GM10248 (cell line): ENCODE measurements at regions of chr7 and their contacts with region 1.

Region 1: GRCh38 chr7:82615527-82615926 is 171.9 kb upstream of the CACNA2D1 start:
- DNase-seq: no peak
- CTCF ChIP-seq: no peak

Region 2: DNA sequence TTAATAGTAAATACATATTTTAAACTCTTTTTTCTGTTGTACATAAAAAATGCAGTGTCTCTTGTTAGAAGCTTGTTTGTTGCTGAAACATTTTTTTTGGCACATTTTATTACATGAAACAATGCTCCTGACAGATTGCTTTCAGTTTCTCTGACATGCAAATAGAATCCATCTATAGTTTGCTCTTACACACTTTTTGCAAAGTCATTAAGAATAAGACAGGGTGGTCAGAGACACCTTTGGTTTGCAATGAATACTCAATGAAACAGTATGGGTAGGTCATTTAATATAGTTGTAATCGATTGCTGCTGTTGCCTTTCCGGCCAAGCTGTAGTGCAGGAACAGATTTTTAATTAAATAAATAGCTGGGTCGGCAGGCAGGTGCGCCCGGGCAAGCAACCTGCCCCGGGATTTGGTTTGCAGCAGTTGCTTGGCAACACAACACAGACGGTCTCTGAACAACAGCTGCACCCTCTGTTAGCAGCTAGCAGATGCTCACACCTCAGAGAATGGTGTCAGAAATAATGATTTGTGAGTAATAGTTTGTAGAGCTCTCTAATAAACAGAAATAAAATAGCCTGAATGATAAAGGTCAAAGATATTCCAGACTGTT is 56.2 kb before region 1 on chr7:
- CTCF ChIA-PET with region 1: no interaction called
- POLR2A ChIA-PET with region 1: no interaction called
- DNase-seq: no peak
- CTCF ChIP-seq: no peak

Region 3: GRCh38 chr7:82593780-82594179 is 21.7 kb before region 1 on chr7:
- CTCF ChIA-PET with region 1: no interaction called
- POLR2A ChIA-PET with region 1: no interaction called
- DNase-seq: no peak
- CTCF ChIP-seq: no peak

Region 4: DNA sequence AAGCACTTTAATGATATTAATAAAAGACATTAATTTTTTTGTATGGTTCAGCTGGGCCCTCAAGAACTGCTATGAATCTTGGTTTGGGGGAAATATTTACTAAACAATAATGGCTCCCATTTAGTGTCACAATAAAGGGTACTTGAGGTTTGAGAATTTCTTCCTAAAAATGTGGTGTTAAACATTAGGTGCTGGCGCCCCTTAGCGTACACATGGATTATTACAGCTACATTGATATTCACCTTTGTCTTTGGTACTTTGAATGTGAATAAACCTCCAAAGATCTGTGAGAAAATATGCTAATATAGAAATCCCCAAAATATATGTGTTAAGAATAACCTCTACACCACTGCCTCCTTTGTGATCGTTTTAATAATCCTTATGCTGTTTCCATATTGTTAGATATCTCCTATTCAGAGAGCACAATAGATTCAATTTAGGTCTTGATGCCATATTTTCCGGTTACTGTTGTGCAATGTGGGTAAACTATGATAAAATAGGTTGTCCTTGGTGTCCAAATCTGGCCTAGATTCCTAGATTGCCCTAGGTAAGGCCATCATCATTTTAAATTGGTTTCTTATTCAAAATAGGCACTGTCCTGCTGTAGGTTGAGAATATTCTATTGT is 10.2 kb before region 1 on chr7:
- CTCF ChIA-PET with region 1: interaction called, 17 read pairs
- POLR2A ChIA-PET with region 1: no interaction called
- DNase-seq: peak; percentile 47
- CTCF ChIP-seq: peak; percentile 71

Region 5: GRCh38 chr7:82631998-82632397 is 16.5 kb after region 1 on chr7:
- CTCF ChIA-PET with region 1: no interaction called
- POLR2A ChIA-PET with region 1: no interaction called
- DNase-seq: no peak
- CTCF ChIP-seq: no peak